Activated T-helper 1 cell treated with anti-CD3 and anti-CD28 coated beads, Interleukin-12 subunit alpha, Interleukin-12 subunit beta, Interleukin-2, Interleukin-4 antibody, amounts not matched to agents 30 ng/mL and 10 ng/mL and 1 ng/mL, durations not matched to agents 14 hours and 24 hours and 36 hours (primary cell): ENCODE measurements at regions of chr3 and their contacts with region 1.

Region 1: DNA sequence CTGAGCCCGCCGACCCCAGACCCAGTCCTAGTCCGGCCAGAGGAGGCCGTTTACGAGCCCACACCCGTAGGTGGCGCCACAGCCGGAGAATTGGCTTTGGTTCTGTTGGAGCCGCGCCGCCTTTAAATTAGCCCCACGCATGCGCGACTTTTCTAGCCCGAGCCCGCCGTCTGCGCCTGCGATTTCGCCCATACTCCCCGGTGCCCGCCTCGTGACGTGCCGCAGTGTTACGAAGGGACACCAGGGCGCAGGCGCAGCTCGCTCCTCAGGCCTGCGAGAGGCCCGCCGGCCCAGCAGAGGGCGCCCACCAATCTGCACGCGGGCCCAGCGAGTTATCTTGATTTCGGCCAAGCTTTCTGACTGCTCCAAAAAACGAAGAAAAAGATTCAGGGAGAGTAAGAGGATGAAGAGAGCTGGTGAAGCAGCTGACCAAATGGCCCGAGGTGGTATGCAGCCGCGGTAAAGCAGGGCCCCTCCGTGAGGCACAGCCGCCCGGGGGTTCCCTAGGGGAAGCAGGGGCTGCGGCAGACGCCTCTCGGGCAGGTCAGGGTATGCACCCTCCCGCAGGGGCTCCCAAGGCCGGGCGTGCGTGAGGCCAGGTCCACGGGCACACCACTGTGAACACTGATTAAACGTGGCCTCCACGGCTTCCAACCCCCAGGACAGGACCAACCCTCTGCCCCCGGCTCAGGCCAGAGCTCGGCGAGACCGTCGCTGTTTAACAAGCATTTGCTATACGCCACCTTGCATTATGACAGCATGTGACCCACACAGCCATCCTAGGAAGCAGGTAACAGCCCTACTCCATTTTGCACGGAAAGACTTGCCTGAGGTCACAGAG is 32.8 kb downstream of the RPN1 start:
- DNase-seq: peak; percentile 98
- H3K4me3 Mint-ChIP-seq: peak overlapping the region; percentile 98
- H3K27ac Mint-ChIP-seq: peak overlapping the region; percentile 97
- H3K4me1 Mint-ChIP-seq: peaks cover 29% of the 10 kb centered on the region
- H3K27me3 Mint-ChIP-seq: no peaks in the 10 kb centered on the region

Region 2: GRCh38 chr3:128051837-128052594 is 565.8 kb before region 1 on chr3 and contains the start of gene SEC61A1:
- intact Hi-C with region 1: loop called (anchors 1 kb)
- DNase-seq: peak; percentile 96
- H3K4me3 Mint-ChIP-seq: peak within 1 kb of the TSS; percentile 99
- H3K27ac Mint-ChIP-seq: peak within 1 kb of the TSS; percentile 96
- H3K4me1 Mint-ChIP-seq: peaks cover 43% of the 10 kb centered on the region
- H3K27me3 Mint-ChIP-seq: peaks cover 6% of the 10 kb centered on the region
- total RNA-seq, gene SEC61A1: 205 and 214 TPM in 2 replicates

Region 3: DNA sequence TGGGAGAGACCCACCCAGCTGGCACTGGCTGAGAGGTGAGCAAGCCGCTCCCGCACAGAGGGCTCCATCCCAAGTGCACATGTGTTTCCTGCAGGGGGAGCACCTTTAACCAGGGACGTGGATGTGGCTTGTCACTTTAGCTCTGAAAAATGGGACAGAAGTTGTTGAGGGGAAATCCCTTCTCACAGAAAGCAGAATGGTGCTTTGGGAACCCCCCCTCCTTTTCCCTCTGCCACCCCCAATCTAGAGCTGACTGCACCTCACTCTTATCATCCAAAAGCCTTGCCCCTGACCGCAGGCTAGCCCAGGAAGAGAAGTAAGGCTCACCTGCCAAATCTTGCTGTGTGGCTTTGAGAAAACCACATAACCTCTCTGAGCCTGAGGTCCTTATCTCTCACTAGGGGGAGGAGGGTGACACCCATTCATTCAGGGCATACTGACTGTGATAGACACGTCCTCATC is 45.1 kb before region 1 on chr3:
- intact Hi-C with region 1: loop called (anchors 2 kb)
- DNase-seq: no peak
- H3K4me3 Mint-ChIP-seq: no peak overlapping the region
- H3K27ac Mint-ChIP-seq: peak overlapping the region; percentile 3
- H3K4me1 Mint-ChIP-seq: peaks cover 11% of the 10 kb centered on the region
- H3K27me3 Mint-ChIP-seq: peaks cover 31% of the 10 kb centered on the region

Region 4: GRCh38 chr3:128680602-128681368 is 63.0 kb after region 1 on chr3:
- intact Hi-C with region 1: loop called (anchors 1 kb)
- DNase-seq: peak; percentile 96
- H3K4me3 Mint-ChIP-seq: peak overlapping the region; percentile 85
- H3K27ac Mint-ChIP-seq: peak overlapping the region; percentile 89
- H3K4me1 Mint-ChIP-seq: peaks cover 29% of the 10 kb centered on the region
- H3K27me3 Mint-ChIP-seq: no peaks in the 10 kb centered on the region

Region 5: GRCh38 chr3:128787256-128788240 is 169.8 kb after region 1 on chr3:
- intact Hi-C with region 1: loop called (anchors 1 kb)
- DNase-seq: no peak
- H3K4me3 Mint-ChIP-seq: peak overlapping the region; percentile 70
- H3K27ac Mint-ChIP-seq: peak overlapping the region; percentile 97
- H3K4me1 Mint-ChIP-seq: peaks cover 83% of the 10 kb centered on the region
- H3K27me3 Mint-ChIP-seq: no peaks in the 10 kb centered on the region

Region 6: GRCh38 chr3:128845778-128846485 is 228.2 kb after region 1 on chr3:
- intact Hi-C with region 1: loop called (anchors 1 kb)
- DNase-seq: peak; percentile 75
- H3K4me3 Mint-ChIP-seq: peak overlapping the region; percentile 77
- H3K27ac Mint-ChIP-seq: peak overlapping the region; percentile 90
- H3K4me1 Mint-ChIP-seq: peaks cover 18% of the 10 kb centered on the region
- H3K27me3 Mint-ChIP-seq: no peaks in the 10 kb centered on the region

Region 7: DNA sequence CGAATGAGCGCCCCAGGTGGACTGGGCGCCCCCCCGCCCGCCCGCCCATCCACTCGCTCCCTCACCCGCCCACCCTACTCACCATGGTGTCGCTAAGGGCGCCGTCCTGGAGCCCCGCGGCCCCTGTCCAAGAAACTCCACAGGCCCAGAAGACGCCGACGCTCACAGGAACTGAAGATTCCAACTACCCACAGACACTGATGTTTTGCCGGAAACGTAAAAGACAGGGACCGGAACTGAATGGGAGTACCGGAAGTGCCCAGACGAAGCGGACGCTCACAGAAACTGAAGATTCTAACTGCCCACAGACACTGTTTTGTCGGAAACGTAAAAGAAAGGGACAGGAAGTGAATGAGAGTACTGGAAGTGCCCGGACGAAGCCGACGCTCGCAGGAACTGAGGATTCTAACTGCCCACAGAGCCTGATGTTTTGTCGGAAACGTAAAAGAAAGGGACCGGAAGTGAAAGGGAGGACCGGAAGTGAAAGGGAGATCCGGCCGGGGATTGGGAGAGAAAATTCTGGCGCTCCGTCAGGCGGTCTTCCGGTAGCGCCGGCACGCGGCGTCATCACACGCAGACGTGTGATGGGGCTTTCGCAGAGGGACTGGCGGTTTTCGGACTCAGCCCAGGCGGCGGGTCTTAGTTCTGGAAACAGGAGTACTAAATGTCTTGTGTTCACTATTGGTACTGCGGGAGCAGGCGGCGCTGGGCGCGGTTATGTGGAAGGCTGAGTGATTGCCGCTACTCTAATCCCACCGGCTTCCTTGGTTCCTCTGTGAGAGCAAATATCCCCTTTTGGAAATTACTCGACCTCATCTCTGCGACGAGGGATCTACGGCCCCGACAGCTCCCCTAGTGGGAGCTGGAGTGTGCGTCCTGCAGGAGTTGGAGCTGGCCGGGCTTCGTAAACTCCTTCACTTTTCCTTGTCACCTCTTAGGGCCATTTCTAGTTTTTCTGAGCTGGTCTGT is 543.4 kb after region 1 on chr3 and contains the start of gene ISY1:
- intact Hi-C with region 1: loop called (anchors 1 kb)
- DNase-seq: peak; percentile 88
- H3K4me3 Mint-ChIP-seq: peak within 1 kb of the TSS; percentile 97
- H3K27ac Mint-ChIP-seq: peak within 1 kb of the TSS; percentile 99
- H3K4me1 Mint-ChIP-seq: peaks cover 34% of the 10 kb centered on the region
- H3K27me3 Mint-ChIP-seq: no peaks in the 10 kb centered on the region
- total RNA-seq, gene ISY1: 72.3 and 75.4 TPM in 2 replicates